ENCODE measurements at regions of chr11 and their contacts with region 1.

Region 1: DNA sequence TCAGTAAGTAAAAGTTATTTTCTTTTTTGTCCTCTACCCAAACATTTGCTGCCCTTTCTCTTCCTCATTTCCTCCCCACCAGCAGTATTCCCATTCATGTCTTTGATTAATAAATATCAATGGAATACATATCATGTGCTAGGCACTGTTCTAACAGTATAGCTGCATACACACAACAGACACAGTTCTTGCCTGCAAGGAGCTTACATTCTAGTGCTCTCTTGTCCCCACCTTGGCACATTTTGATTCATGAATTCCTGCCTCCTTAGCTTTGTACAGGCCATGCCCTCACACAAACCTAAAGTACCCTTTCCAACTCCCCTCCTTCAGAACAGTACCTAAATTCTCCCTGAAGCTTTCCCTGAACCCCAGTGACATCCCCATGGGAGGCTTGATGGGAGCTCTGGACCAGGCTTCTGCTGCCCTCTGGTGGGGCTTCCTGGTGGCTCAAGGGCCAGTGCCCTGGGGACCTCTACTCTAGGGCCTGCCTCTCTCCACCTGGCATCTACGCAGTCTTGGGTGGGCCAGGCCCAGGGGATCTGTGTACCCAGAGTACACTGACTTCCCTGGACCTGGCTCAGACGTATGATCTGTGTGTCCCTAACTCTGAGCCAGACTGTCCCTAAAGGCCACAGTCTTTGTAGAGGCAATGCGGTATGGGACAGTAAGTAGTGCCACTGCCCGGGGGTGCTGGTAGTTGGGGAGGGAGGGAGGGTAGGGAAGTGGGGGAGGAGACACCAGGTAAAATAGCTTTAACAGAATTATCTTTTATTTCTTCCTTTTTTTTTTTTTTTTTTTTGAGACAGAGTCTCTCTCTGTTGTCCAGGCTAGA is 14.1 kb downstream of the RPS13 start:
- DNase-seq: peak; percentile 63
- H3K4me3 ChIP-seq: no peak overlapping the region
- H3K27ac ChIP-seq: no peak overlapping the region
- H3K4me1 ChIP-seq: no peaks in the 10 kb centered on the region
- H3K27me3 ChIP-seq: no peaks in the 10 kb centered on the region

Region 2: DNA sequence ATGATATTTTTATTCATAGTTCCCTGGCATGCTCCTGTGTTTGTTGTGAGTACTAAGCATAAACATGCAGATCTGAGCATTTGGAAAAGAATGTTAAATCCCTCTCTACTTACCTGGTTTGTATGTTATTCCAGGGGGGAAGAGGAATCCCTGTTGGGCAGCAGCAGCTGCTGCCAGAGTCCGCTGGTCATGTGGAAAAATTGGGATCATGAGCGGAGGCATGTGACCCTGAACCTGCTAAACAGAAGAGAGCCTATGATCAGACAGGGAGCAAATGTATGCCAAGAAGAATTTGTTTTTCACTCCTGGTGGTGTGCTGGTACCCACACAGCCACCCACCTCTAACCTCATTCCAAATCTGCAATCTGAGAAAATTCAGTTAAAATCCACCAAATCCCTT is 951.7 kb before region 1 on chr11:
- in situ Hi-C with region 1: no loop called
- DNase-seq: no peak
- H3K4me3 ChIP-seq: no peak overlapping the region
- H3K27ac ChIP-seq: no peak overlapping the region
- H3K4me1 ChIP-seq: no peaks in the 10 kb centered on the region
- H3K27me3 ChIP-seq: peaks cover 14% of the 10 kb centered on the region

Region 3: DNA sequence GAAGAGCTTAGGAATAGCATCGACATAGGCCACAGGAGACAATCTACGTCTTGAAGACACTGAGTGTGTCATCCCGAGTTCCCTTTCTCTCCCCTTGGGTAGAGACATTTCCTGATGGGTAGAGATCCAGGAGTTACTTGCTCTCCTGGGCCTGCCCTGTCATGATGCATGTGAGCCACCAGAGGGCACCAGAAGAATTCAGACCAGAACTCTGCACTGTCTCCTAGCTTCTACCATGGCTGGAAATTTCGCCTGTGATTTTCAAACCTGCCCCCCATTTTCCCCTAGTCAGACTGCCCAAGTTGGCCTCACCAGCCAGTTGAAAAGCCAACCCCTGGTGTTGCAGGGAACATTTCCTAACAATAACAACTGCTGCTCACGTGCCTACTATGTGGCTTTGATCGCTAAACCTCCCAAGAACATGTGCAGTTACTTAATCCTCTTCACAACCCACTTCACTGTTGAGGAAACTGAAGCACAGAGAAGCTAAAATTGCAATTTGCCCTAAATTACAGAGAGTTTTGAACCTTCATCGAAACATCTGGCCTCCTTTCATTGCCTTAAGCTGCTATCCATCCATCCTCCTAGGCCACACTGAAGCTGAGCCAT is 277.8 kb before region 1 on chr11:
- in situ Hi-C with region 1: loop called (anchors 10 kb)
- DNase-seq: peak; percentile 87
- H3K4me3 ChIP-seq: no peak overlapping the region
- H3K27ac ChIP-seq: no peak overlapping the region
- H3K4me1 ChIP-seq: peaks cover 21% of the 10 kb centered on the region
- H3K27me3 ChIP-seq: no peaks in the 10 kb centered on the region

Region 4: DNA sequence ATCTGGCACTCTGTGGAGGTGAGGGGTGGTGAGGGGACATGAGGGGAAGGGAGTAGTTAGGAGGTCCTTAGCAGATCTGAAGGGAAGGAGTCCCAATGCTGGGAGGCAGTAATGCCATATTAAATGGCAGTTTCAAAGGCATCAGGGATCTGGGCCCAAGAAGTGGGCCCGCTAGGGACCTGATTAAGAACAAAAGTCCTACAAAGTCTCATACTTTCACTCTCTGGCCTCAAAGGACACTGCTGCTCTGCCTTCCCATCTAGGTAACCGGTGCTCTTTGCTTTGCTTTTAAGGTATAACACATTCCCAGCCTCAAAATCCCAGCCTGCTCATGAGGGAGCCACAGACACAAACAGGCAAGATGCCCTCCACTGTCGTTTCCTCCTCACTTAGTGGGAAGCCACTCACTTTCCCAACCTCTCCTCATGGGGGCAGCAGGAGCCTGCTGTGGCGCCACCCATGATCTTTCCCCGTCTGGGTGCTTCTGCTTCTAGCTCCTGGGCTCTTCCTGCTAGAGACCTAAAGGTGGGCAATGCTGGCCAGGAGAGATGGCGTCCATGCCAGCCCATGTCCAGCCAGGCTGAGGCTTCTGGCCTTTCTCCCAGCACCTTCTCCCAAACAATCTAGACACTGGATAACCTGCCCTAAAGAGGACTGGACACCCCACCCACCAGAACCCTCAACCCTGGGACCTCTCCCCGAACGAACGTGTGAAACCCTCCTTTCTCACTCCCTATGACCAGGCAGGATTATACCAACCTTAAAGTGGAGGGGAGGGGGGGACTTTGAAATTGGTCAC is 117.5 kb before region 1 on chr11:
- in situ Hi-C with region 1: loop called (anchors 10 kb)
- DNase-seq: peak; percentile 68
- H3K4me3 ChIP-seq: no peak overlapping the region
- H3K27ac ChIP-seq: no peak overlapping the region
- H3K4me1 ChIP-seq: no peaks in the 10 kb centered on the region
- H3K27me3 ChIP-seq: no peaks in the 10 kb centered on the region; the same call in 1 of the 2 replicates

Measured in GM23248 (cell line).